ENCODE measurements at regions of chr4 and their contacts with region 1.

Region 1: GRCh38 chr4:2934813-2935761 is 28.1 kb downstream of the NOP14 start:
- DNase-seq: no peak
- H3K4me3 ChIP-seq: peak overlapping the region; percentile 89
- CTCF ChIP-seq: no peak

Region 2: DNA sequence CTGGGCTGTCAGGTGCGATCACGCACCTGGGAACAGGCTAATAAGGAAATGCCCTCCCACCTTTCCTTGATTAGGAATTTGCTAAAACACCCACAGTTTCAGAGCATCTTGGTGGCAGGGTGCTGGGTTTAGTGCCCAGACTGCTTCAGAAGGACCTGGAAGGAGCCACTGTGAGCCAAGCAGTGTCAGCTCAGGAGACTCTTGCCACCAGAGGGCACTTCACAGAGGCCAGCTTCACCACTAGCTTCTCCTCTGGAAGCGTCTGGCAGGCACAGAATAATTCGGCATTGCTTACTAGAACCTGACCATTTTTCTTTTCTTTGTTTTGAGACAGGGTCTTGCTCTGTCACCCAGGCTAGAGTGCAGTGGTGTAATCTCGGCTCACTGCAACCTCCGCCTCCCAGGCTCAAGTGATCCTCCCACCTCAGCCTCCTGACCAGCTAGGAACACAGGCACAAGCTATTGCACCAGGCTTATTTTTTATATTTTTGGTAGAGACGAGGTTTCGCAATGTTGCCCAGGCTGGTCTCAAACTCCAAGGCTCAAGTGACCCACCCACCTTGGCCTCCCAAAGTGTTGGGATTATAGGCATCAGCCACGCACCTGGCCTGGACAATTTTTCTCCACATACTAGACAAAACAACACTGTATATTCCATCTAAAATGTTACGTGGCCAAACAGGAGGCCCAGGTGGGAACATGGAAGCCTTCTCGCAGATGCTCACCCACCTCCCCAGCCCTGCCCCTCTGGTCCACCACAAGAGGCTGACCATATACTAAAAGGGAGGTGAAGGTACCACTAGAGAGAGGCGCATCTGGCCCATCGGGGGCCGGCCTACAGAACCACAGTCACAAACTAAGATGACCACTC is 14.0 kb after region 1 on chr4:
- CTCF ChIA-PET with region 1: interaction called, 14 read pairs
- POLR2A ChIA-PET with region 1: interaction called, 5 read pairs
- DNase-seq: no peak
- H3K4me3 ChIP-seq: no peak overlapping the region
- CTCF ChIP-seq: peak; percentile 63